Activated naive CD4-positive, alpha-beta T cell treated with anti-CD3 and anti-CD28 coated beads, Interleukin-2, amount 10 ng/mL, durations not matched to agents 7 days and 5 days (primary cell): ENCODE measurements at regions of chr4 and their contacts with region 1.

Region 1: GRCh38 chr4:17544205-17544604 is 29.2 kb downstream of the CLRN2 start:
- DNase-seq: no peak
- H3K4me3 Mint-ChIP-seq: no peak overlapping the region
- H3K27ac Mint-ChIP-seq: no peak overlapping the region
- H3K4me1 Mint-ChIP-seq: peaks cover 4% of the 10 kb centered on the region
- H3K27me3 Mint-ChIP-seq: peaks cover 13% of the 10 kb centered on the region

Region 2: GRCh38 chr4:17134535-17134934 is 409.7 kb before region 1 on chr4:
- CTCF ChIA-PET with region 1: no interaction called
- DNase-seq: no peak
- H3K4me3 Mint-ChIP-seq: no peak overlapping the region
- H3K27ac Mint-ChIP-seq: no peak overlapping the region
- H3K4me1 Mint-ChIP-seq: no peaks in the 10 kb centered on the region
- H3K27me3 Mint-ChIP-seq: no peaks in the 10 kb centered on the region

Region 3: DNA sequence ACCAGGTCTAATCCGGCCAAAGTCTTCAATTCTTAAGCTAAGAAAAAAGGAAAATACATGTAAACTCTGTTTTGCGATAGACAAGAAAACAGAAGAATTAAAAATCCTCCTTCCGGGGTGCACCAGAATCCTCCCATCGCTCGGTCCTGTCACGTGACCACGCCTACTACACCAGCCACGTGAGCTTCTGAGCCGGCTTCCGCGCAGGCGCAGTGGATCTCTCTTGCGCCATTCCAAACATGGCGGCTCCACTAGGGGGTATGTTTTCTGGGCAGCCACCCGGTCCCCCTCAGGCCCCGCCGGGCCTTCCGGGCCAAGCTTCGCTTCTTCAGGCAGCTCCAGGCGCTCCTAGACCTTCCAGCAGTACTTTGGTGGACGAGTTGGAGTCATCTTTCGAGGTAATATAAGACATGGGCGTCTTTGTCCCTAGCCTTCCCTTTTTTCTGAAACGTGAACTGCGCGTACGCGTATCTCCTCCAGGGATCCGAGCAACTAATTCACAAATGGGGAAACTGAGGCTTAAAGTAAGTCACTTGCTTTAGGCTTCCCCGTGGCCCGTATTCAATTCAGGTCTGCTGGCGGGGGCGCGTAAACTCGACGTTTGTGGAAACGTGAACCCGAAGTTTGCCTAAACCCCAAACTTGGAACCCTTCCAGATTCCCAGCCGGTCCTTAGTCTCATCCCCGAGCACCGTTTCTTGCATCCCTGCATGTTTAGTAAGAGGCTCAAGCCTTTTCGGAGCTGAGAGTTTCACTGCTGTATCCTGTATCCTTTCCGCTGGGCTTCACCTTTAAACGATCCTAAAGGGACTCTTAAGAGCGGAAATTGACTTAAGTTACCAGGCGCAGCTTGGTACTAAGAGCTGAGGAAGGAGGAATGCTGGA is 70.5 kb after region 1 on chr4 and contains the start of gene MED28:
- CTCF ChIA-PET with region 1: interaction called, 12 read pairs
- DNase-seq: peak; percentile 97
- H3K4me3 Mint-ChIP-seq: peak within 1 kb of the TSS; percentile 99
- H3K27ac Mint-ChIP-seq: peak within 1 kb of the TSS; percentile 98
- H3K4me1 Mint-ChIP-seq: peaks cover 58% of the 10 kb centered on the region
- H3K27me3 Mint-ChIP-seq: no peaks in the 10 kb centered on the region

Region 4: GRCh38 chr4:17636696-17637622 is 92.8 kb after region 1 on chr4:
- CTCF ChIA-PET with region 1: interaction called, 23 read pairs
- DNase-seq: peak; percentile 81
- H3K4me3 Mint-ChIP-seq: no peak overlapping the region
- H3K27ac Mint-ChIP-seq: peak overlapping the region; percentile 25
- H3K4me1 Mint-ChIP-seq: no peaks in the 10 kb centered on the region
- H3K27me3 Mint-ChIP-seq: no peaks in the 10 kb centered on the region

Region 5: DNA sequence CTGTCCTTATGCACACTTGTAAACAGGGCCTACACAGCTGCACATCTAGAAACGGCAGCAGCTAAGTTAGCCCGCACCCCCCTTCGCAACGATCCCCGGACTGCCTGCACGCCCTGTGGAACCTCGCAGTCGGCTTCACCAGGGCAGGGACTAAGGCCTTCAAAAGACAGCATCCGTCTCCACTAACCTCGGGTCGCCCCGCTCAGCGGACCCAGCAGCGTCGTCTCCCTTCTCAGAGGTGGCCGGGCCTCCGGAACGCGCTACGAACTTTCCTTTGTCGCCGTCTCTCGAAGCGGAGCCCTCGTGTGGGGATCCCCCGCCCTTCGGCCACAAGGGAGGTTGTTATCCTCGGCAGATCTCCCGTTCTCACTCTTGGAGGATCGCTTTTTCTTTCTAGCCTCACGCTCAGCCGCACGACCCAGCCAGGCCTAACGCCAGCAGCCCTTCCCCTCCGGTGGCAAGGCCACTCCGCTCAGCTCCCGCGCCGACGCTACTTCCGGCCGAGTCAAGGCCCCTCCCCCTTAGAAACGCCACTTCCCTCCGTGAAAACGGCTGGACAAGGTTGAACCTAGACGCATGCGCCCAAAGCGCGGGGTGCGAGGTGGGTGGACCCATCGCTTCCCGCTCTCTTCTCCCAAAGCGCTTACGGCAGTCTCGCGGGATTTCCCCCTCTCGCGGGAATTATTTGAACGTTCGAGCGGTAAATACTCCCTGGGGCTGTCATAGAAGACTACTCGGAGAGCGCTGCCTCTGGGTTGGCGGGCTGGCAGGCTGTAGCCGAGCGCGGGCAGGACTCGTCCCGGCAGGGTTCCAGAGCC is 266.3 kb after region 1 on chr4 and contains the starts of genes DCAF16 and NCAPG:
- CTCF ChIA-PET with region 1: interaction called, 21 read pairs
- DNase-seq: peak; percentile 100
- H3K4me3 Mint-ChIP-seq: peak within 1 kb of the TSS; percentile 87
- H3K27ac Mint-ChIP-seq: peak within 1 kb of the TSS; percentile 97
- H3K4me1 Mint-ChIP-seq: peaks cover 59% of the 10 kb centered on the region
- H3K27me3 Mint-ChIP-seq: peaks cover 5% of the 10 kb centered on the region

Region 6: DNA sequence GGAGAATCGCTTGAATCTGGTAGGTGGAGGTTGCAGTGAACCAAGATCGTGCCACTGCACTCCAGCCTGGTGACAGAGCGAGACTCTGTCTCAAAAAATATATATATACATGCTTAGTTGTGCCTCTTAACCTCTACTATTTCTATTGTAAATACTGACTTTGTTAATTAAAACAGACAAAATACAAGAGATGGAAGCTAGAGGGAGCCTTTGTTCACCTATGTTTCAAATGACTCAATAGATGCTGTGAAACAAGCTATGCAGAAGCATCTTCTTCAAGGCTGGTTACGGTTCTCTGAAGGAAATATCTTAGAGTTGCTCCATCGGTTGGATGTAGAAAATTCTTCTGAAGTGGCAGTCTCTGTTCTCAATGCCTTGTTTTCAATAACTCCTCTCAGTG is 272.8 kb after region 1 on chr4:
- CTCF ChIA-PET with region 1: interaction called, 10 read pairs
- DNase-seq: no peak
- H3K4me3 Mint-ChIP-seq: no peak overlapping the region
- H3K27ac Mint-ChIP-seq: peak overlapping the region; percentile 85
- H3K4me1 Mint-ChIP-seq: peaks cover 53% of the 10 kb centered on the region
- H3K27me3 Mint-ChIP-seq: no peaks in the 10 kb centered on the region